MCF 10A (cell line): ENCODE measurements at regions of chr16 and their contacts with region 1.

Region 1: DNA sequence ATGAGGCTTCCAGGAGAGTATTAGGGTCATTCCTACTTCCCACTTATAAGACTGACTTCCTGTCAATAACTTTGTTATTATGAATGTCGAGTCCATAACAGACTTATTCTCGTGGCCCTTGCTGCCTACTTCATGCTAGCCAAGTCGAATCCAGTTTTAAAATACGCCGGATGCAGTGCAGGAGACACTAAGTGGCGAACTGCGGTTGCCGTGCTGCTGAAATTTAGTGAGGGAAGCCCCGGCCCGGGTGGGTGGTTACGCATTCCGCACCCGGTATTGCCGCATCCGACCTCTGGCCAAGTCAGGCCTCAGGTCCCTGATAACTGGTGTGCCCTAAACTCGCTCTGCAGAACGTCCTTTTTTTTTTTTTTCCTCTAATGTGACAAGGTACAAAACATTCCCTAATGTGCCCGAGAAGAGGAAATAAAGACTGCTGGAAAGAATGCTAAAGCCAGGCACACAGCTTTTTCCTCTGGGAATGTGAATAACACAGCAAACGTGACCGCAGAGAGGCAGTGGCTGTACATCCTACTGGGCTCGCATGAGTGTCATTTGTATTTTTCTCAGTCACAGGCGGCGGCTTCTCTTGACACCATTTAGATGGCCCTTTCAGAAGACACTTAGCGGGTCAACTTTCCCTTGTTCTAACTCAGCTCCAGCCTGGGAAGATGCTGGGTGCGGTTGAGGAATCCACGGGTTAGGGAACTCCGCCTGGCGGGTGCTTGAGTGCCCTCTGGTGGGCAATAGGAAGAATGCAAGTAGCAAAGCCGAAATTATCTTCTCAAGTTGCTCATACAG is 7.1 kb upstream of the AKTIP start:
- DNase-seq: peak; percentile 63
- H3K4me3 Mint-ChIP-seq: no peak overlapping the region
- H3K27ac Mint-ChIP-seq: no peak overlapping the region
- H3K4me1 Mint-ChIP-seq: no peaks in the 10 kb centered on the region
- H3K27me3 Mint-ChIP-seq: no peaks in the 10 kb centered on the region
- CTCF ChIP-seq: peak; percentile 79

Region 2: DNA sequence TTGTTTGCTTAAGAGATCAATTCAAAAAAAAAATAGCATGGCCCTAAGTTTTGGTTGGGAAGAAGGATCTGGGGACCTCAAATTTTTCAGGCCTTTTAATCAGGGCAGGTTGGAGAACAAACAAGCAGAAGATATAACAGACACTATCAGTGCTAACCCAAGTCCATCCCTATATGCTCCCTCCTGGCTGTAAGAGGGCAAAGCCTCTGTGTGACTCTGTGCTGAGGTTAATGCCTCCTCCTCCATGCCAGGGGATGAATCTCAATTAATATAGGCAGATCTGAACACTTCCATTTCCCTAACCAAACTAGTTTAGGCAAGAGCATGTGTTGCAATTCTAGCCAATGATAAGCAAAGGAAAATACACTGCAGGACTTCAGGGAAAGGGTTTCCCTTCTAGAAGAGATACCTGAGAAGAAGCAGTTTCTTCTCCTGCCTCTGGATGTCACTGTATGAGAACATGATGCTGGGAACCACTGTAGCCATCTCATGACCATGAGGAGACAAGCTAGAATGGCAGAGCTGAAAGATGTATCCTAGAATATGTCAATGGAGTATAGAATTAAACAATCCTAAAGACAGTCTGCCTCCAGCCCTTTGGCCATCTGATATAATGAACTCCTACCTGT is 533.5 kb before region 1 on chr16:
- CTCF ChIA-PET with region 1: no interaction called
- POLR2A ChIA-PET with region 1: no interaction called
- intact Hi-C with region 1: loop called (anchors 2 kb)
- DNase-seq: peak; percentile 60
- H3K4me3 Mint-ChIP-seq: no peak overlapping the region
- H3K27ac Mint-ChIP-seq: no peak overlapping the region
- H3K4me1 Mint-ChIP-seq: no peaks in the 10 kb centered on the region
- H3K27me3 Mint-ChIP-seq: peaks cover 14% of the 10 kb centered on the region
- CTCF ChIP-seq: peak; percentile 19